ENCODE measurements at regions of chr2 and their contacts with region 1.

Region 1: DNA sequence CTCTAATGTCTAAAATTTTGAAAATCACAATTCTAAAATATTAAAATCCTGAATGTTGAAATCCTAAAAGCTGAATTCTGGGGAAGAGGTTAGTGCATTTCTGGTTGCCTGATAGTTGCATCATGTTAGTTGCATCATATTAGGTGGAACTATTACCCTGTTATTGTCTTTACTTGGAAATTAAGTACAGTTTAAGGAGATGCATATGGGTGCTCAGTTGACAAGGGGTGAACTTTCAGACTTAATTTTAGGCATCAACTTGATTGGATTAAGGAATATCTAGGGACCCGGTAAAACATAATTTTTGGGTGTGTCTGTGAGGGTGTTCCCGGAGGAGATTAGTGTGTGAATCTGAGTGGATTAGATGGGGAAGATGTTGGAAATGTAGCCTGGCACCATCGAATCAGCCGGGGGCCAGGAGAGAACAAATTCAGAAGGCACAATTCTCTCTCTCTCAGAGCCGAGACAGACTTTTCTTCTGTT is 409.8 kb downstream of the PLCL1 start:
- DNase-seq: no peak

Region 2: DNA sequence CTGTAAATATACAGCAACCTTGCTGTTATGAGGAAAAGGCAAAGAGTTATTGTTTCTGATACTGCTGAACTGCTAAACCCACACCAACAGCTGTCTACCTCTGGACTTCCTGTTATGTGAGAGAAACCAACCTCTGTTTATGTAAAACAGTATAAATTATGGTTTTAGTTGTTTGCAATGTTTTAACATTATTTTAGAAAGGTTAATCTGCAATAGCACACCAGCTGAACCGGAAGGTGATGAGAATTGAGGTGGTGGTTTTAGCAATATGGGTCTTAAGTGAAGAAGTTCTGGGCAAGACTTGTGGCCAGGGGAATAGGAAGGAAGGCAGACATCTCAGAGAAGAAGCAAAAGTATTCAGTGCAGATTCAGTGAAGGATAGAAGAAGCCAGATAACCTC is 172.0 kb before region 1 on chr2:
- CTCF ChIA-PET with region 1: interaction called, 11 read pairs
- POLR2A ChIA-PET with region 1: no interaction called
- DNase-seq: no peak

Measured in HEK293T (cell line).